AG04449 (cell line): ENCODE measurements at regions of chr2 and their contacts with region 1.

Region 1: DNA sequence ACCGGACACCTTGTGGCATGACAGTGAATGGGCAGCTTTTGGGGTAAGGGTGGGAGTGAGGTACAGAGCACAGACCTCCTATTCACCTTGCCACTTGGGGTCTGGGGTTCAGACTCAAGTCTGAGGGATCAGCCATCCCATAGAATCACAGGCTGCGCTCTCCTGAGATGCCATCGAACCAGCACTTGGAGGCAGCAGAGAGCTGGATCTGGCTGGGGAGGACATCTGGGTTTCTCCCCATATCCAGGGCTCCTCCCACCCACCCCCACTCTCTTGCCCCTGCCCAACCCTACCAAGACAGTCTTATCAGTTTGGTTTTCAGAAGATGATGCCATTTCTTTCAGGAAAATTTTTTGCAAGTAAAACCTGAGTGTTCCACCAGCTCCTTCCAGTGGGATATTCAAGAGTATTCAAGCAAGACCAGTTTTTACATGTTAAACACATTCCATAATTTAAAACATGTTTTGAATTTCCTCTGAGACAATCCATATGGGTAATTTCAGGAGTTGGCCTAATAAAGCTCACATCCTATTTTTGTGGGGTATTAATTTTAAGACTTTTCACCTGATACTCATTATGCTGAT is 29.2 kb upstream of the TEX44 start:
- DNase-seq: no peak
- H3K4me3 ChIP-seq: no peak overlapping the region
- CTCF ChIP-seq: peak; percentile 79

Region 2: DNA sequence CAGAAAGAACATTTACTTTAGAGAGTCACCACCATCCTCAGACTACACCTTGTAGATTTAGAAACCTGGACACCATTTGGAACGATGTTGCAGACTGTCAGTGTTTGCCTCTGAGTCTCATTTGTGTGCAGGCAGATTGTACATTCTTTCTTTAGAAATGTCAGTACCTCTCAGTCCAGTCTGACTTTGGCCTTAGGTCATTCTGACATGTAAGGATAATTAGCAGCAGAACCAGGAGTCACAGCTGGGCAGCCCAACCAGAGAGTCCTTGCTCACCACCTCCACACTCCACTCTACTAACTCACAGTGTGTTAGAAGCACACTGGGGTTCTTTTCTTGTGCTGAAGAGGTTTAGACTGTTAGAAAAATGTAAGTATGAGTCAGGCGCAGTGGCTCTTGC is 44.0 kb before region 1 on chr2:
- CTCF ChIA-PET with region 1: interaction called, 45 read pairs
- POLR2A ChIA-PET with region 1: no interaction called
- DNase-seq: no peak
- H3K4me3 ChIP-seq: no peak overlapping the region
- CTCF ChIP-seq: no peak

Region 3: DNA sequence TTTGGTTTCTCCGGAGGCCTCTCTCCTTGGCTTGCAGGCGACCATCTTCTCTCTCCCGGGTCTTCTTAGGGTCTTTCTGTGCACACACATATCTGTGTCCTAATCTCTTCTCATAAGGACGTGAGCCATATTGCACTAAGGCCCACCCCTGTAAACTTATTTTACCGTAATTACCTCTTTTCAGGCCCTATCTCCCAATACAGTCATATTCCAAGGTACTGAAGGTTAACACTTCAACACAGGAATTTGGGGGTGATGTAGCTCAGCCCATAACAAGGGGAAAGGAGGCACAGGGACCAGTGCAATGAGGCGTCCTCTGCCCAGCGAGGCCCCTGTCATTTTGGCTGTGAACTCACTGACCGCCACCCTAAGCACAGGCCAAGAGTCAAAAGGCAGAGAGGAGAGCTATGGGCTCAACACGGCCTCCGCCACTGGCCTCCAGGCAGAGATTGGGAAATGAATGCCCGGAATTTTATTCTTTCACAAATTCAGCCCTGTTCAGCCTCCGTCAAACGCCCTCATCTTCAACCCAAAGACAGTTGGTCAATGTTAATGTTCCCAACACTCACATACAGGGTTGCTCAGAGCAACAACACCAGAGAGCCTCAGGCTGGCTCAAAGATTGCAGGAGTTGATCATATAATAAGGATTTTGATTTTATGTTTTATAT is 17.3 kb before region 1 on chr2:
- CTCF ChIA-PET with region 1: interaction called, 47 read pairs
- POLR2A ChIA-PET with region 1: interaction called, 3 read pairs
- DNase-seq: no peak
- H3K4me3 ChIP-seq: no peak overlapping the region
- CTCF ChIP-seq: no peak

Region 4: GRCh38 chr2:231590619-231591018 is 27.1 kb after region 1 on chr2:
- CTCF ChIA-PET with region 1: interaction called, 10 read pairs
- POLR2A ChIA-PET with region 1: no interaction called
- DNase-seq: no peak
- H3K4me3 ChIP-seq: no peak overlapping the region
- CTCF ChIP-seq: no peak

Region 5: GRCh38 chr2:231701456-231702373 is 138.2 kb after region 1 on chr2:
- CTCF ChIA-PET with region 1: no interaction called
- POLR2A ChIA-PET with region 1: no interaction called
- DNase-seq: no peak
- H3K4me3 ChIP-seq: no peak overlapping the region
- CTCF ChIP-seq: no peak